HepG2 (cell line): ENCODE measurements at regions of chr19 and their contacts with region 1.

Region 1: DNA sequence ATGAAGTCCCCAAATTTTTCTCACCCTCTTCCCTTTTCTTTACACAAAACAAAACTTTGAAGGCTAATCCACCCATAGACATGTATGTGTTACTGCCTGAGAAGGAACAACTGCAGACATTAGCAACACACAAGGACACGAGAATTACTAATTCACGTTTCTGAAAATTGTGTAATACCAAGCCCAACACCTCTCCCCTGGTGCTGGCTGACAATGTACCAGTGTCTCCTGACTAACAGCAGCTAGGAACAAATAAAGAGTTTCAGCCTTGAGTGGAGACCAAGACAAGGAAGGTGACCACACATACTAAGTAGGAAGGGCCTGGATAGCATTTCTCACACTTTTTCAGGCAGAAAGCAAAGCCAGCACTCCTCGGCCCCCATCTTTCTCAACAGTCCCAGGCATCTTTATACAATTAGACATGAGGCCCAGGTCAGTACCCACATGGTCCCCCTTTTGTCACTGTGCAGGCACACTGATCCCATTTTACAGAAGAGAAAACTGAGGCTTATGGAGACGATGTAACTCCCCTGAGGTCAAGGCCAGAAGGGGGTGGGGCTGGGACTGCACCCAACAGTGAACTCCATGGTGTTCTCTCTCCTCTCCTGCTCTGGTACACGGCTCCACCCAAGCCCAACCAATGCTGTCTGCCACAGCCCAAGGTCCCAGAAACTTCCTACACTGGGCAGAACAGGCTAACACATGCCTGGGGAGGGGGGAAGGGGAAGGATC is 8.7 kb downstream of the BRD4 start:
- DNase-seq: peak; percentile 59
- ATAC-seq: peak; percentile 65
- H3K4me3 ChIP-seq: no peak overlapping the region
- H3K27ac ChIP-seq: peak overlapping the region; percentile 40
- H3K4me1 ChIP-seq: peaks cover 92% of the 10 kb centered on the region
- H3K27me3 ChIP-seq: no peaks in the 10 kb centered on the region
- CTCF ChIP-seq: no peak
- EP300 ChIP-seq: no peak
- POLR2A ChIP-seq: no peak
- RAD21 ChIP-seq: no peak

Region 2: GRCh38 chr19:15264061-15264932 is 59.4 kb before region 1 on chr19:
- CTCF ChIA-PET with region 1: no interaction called
- POLR2A ChIA-PET with region 1: no interaction called
- in situ Hi-C with region 1: no loop called
- intact Hi-C with region 1: loop called (anchors 10 kb)
- DNase-seq: peak; percentile 56
- ATAC-seq: peak; percentile 74
- H3K4me3 ChIP-seq: no peak overlapping the region
- H3K27ac ChIP-seq: no peak overlapping the region
- H3K4me1 ChIP-seq: peaks cover 23% of the 10 kb centered on the region
- H3K27me3 ChIP-seq: no peaks in the 10 kb centered on the region
- CTCF ChIP-seq: peak; percentile 91
- EP300 ChIP-seq: no peak
- POLR2A ChIP-seq: no peak
- RAD21 ChIP-seq: peak; percentile 83